CD4-positive, alpha-beta T cell (primary cell): ENCODE measurements at regions of chr4 and their contacts with region 1.

Region 1: GRCh38 chr4:89110986-89111832 is at the start of gene TIGD2:
- DNase-seq: peak; percentile 78 to 97 (median 88)
- ATAC-seq: peak; percentile 91
- H3K4me3 ChIP-seq: peak within 1 kb of the TSS; percentile 67
- H3K4me3 Mint-ChIP-seq: peak within 1 kb of the TSS; percentile 90
- H3K27ac ChIP-seq: peak within 1 kb of the TSS; percentile 22 to 52
- H3K27ac Mint-ChIP-seq: peak within 1 kb of the TSS; percentile 77
- H3K4me1 ChIP-seq: peaks cover 18% of the 10 kb centered on the region
- H3K4me1 Mint-ChIP-seq: peaks cover 27% of the 10 kb centered on the region
- H3K27me3 ChIP-seq: no peaks in the 10 kb centered on the region
- H3K27me3 Mint-ChIP-seq: no peaks in the 10 kb centered on the region
- CTCF ChIP-seq: peak; percentile 98
- total RNA-seq, gene TIGD2: 3.3 to 3.9 TPM

Region 2: GRCh38 chr4:87220094-87220822 is 1891.0 kb before region 1 on chr4 and contains the start of gene KLHL8:
- CTCF ChIA-PET with region 1: no interaction called
- POLR2A ChIA-PET with region 1: interaction called, 3 read pairs
- intact Hi-C with region 1: loop called in 1 of 2 experiments (anchors 10 kb)
- DNase-seq: peak; percentile 71 to 94 (median 83)
- ATAC-seq: peak; percentile 88
- H3K4me3 ChIP-seq: peak within 1 kb of the TSS; percentile 96
- H3K4me3 Mint-ChIP-seq: peak within 1 kb of the TSS; percentile 96
- H3K27ac ChIP-seq: peak within 1 kb of the TSS; percentile 79 to 88
- H3K27ac Mint-ChIP-seq: peak within 1 kb of the TSS; percentile 88
- H3K4me1 ChIP-seq: peaks cover 24% of the 10 kb centered on the region
- H3K4me1 Mint-ChIP-seq: peaks cover 24% of the 10 kb centered on the region
- H3K27me3 ChIP-seq: no peaks in the 10 kb centered on the region
- H3K27me3 Mint-ChIP-seq: no peaks in the 10 kb centered on the region
- CTCF ChIP-seq: no peak
- total RNA-seq, gene KLHL8: 6.3 to 7.0 TPM

Region 3: DNA sequence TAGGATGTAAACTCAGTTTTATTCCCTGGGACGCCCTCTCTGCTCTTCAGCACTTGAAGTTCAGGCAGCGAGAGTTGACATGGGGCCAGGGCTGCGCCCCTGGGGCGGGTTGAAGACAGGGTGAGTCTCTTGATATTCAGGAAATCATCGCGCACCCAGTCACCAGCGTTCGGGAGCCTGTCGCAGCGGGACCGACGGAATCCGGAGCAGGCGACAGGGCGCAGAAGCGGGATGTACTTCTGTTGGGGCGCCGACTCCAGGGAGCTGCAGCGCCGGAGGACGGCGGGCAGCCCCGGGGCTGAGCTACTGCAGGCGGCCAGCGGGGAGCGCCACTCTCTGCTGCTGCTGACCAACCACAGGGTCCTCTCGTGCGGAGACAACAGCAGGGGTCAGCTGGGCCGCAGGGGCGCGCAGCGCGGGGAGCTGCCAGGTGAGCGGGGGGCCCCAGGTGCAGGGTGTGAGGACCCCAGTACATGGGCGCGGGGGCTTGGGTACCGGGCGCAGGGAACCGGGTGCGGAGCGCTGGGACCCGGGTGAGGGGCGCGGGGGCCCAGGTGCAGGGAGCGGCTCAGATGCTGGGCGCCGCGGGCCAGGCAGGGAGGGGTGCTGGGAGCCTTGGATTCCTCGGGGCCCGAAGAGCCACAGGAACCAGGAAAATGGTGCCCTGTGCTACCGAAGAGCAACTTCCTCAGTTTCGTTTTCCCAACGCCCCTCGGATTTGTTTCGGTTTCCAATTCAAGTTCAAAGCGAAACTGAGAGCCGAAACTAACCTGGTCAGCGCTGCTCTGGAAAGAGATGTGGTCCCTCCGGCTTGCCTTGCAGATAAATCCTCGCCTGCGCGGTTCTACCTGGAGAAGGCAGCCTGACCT is 732.3 kb before region 1 on chr4 and contains the start of gene HERC6:
- CTCF ChIA-PET with region 1: no interaction called
- POLR2A ChIA-PET with region 1: no interaction called
- intact Hi-C with region 1: loop called in 1 of 2 experiments (anchors 10 kb)
- DNase-seq: peak; percentile 48 to 93 (median 59)
- ATAC-seq: peak; percentile 62
- H3K4me3 ChIP-seq: peak within 1 kb of the TSS; percentile 74
- H3K4me3 Mint-ChIP-seq: peak within 1 kb of the TSS; percentile 94
- H3K27ac ChIP-seq: peak within 1 kb of the TSS; percentile 47 to 89
- H3K27ac Mint-ChIP-seq: peak within 1 kb of the TSS; percentile 93
- H3K4me1 ChIP-seq: peaks cover 35% of the 10 kb centered on the region
- H3K4me1 Mint-ChIP-seq: peaks cover 48% of the 10 kb centered on the region
- H3K27me3 ChIP-seq: no peaks in the 10 kb centered on the region
- H3K27me3 Mint-ChIP-seq: no peaks in the 10 kb centered on the region
- CTCF ChIP-seq: peak; percentile 76
- total RNA-seq, gene HERC6: 9.5 to 10.6 TPM

Region 4: GRCh38 chr4:88523325-88524129 is 587.7 kb before region 1 on chr4 and contains the start of gene PYURF:
- CTCF ChIA-PET with region 1: no interaction called
- POLR2A ChIA-PET with region 1: no interaction called
- intact Hi-C with region 1: loop called in 1 of 2 experiments (anchors 5 kb)
- DNase-seq: peak; percentile 36 to 88 (median 69)
- ATAC-seq: peak; percentile 67
- H3K4me3 ChIP-seq: peak within 1 kb of the TSS; percentile 82
- H3K4me3 Mint-ChIP-seq: peak within 1 kb of the TSS; percentile 97
- H3K27ac ChIP-seq: peak within 1 kb of the TSS; percentile 42 to 59
- H3K27ac Mint-ChIP-seq: peak within 1 kb of the TSS; percentile 88
- H3K4me1 ChIP-seq: peaks cover 20% of the 10 kb centered on the region
- H3K4me1 Mint-ChIP-seq: peaks cover 58% of the 10 kb centered on the region
- H3K27me3 ChIP-seq: no peaks in the 10 kb centered on the region
- H3K27me3 Mint-ChIP-seq: no peaks in the 10 kb centered on the region
- CTCF ChIP-seq: no peak
- total RNA-seq, gene PYURF: 25.3 to 26.8 TPM

Region 5: DNA sequence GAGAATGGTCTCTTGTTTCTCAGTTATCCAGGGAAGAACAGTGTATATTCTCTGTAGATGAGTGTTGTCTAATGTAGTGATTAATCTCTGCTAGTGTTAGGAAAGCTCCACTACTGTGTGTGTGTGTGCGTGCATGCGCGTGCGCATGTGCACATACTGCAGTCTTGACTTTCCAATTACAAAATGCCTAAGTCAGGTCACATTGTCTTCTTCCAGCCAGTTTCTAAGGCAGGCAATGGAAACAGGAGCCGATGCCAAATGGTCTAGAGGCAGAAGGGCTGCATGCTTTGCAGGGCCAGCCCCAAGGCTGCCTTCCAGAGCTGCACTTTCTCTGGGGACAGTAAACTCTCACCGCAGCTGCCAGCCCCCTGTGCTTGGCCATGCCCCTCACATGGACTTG is 383.1 kb before region 1 on chr4:
- CTCF ChIA-PET with region 1: no interaction called
- POLR2A ChIA-PET with region 1: no interaction called
- intact Hi-C with region 1: no loop called
- DNase-seq: no peak
- ATAC-seq: no peak
- H3K4me3 ChIP-seq: no peak overlapping the region
- H3K4me3 Mint-ChIP-seq: no peak overlapping the region
- H3K27ac ChIP-seq: no peak overlapping the region
- H3K27ac Mint-ChIP-seq: peak overlapping the region; percentile 7
- H3K4me1 ChIP-seq: no peaks in the 10 kb centered on the region
- H3K4me1 Mint-ChIP-seq: no peaks in the 10 kb centered on the region
- H3K27me3 ChIP-seq: no peaks in the 10 kb centered on the region
- H3K27me3 Mint-ChIP-seq: no peaks in the 10 kb centered on the region
- CTCF ChIP-seq: no peak

Region 6: DNA sequence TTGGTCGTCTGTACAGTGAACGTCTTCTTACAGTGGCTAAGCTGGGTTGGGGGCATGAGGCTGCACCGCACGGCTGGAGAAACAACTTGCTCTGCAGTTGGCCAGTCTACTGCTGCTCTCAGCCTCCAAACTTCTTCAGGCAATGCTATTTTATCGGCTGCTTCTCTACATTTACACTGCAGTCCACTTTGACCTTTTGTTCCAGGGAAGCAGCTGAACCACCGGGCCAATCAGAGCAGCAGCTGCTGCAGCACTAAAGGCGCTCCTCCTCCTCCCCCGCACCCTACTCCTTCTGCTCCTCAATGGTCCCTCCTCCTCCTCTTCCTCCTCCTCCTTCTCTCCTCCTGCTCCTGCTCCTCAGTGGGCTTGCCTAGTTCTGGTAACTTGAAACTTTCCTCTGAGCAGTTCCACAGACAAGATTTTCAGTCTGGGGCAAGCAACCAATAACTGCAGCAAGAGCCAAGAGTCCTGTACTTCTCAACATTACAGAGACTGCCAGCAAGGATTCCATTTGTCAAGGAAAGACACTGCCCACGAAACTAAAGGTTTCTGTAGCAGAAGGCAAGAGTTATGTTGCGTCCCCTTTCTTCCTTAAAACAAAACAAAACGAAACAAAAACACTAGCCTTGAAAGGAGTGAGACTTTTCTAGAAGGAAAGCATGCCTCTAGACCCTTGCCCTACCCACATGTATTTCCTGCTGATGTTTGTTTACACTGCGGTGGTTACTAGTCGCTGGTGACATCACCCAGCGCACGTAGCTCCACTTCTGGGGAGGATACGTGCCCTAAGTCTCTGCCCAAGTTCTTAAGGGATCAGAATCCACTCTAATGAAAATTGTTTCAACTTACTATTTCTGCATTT is 287.9 kb before region 1 on chr4:
- CTCF ChIA-PET with region 1: no interaction called
- POLR2A ChIA-PET with region 1: interaction called, 3 read pairs
- intact Hi-C with region 1: loop called (anchors 1 to 5 kb)
- DNase-seq: peak; percentile 36 to 94 (median 61)
- ATAC-seq: peak; percentile 92
- H3K4me3 ChIP-seq: peak overlapping the region; percentile 61
- H3K4me3 Mint-ChIP-seq: peak overlapping the region; percentile 91
- H3K27ac ChIP-seq: peak overlapping the region; percentile 78 to 90
- H3K27ac Mint-ChIP-seq: peak overlapping the region; percentile 97
- H3K4me1 ChIP-seq: peaks cover 6% of the 10 kb centered on the region
- H3K4me1 Mint-ChIP-seq: peaks cover 50% of the 10 kb centered on the region
- H3K27me3 ChIP-seq: no peaks in the 10 kb centered on the region
- H3K27me3 Mint-ChIP-seq: no peaks in the 10 kb centered on the region
- CTCF ChIP-seq: no peak

Region 7: DNA sequence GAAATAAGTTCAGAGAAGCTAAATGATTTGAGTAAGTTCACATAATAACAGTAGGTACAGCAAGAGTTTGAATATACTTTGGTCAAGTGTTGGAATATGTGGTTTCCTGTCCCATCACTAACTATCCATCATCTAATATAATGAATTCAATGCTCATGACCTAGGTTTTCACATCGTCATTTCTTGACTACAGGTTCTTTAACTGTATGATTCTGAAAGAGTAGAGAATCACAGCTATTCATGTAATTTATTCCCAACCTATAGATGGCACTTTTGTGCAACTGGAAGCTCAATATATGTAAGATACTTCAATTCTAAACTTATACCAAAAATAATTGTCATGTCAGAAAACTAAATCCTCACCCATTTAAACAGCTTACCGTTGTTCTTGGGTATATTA is 53.2 kb after region 1 on chr4:
- CTCF ChIA-PET with region 1: no interaction called
- POLR2A ChIA-PET with region 1: no interaction called
- intact Hi-C with region 1: no loop called
- DNase-seq: no peak
- ATAC-seq: no peak
- H3K4me3 ChIP-seq: no peak overlapping the region
- H3K4me3 Mint-ChIP-seq: no peak overlapping the region
- H3K27ac ChIP-seq: no peak overlapping the region
- H3K27ac Mint-ChIP-seq: no peak overlapping the region
- H3K4me1 ChIP-seq: no peaks in the 10 kb centered on the region
- H3K4me1 Mint-ChIP-seq: no peaks in the 10 kb centered on the region
- H3K27me3 ChIP-seq: peaks cover 0 to 4% of the 10 kb centered on the region in 2 experiments
- H3K27me3 Mint-ChIP-seq: peaks cover 8% of the 10 kb centered on the region
- CTCF ChIP-seq: peak; percentile 24

Region 8: GRCh38 chr4:89307446-89308160 is 196.4 kb after region 1 on chr4 and contains the start of gene GPRIN3:
- CTCF ChIA-PET with region 1: no interaction called
- POLR2A ChIA-PET with region 1: no interaction called
- intact Hi-C with region 1: loop called in 1 of 2 experiments (anchors 10 kb)
- DNase-seq: peak; percentile 45 to 88 (median 63)
- ATAC-seq: peak; percentile 66
- H3K4me3 ChIP-seq: peak within 1 kb of the TSS; percentile 93
- H3K4me3 Mint-ChIP-seq: peak within 1 kb of the TSS; percentile 95
- H3K27ac ChIP-seq: peak within 1 kb of the TSS; percentile 73 to 88
- H3K27ac Mint-ChIP-seq: peak within 1 kb of the TSS; percentile 92
- H3K4me1 ChIP-seq: peaks cover 26% of the 10 kb centered on the region
- H3K4me1 Mint-ChIP-seq: peaks cover 67% of the 10 kb centered on the region
- H3K27me3 ChIP-seq: no peaks in the 10 kb centered on the region
- H3K27me3 Mint-ChIP-seq: no peaks in the 10 kb centered on the region
- CTCF ChIP-seq: no peak
- total RNA-seq, gene GPRIN3: 46.4 TPM

Region 9: GRCh38 chr4:89509708-89510281 is 398.6 kb after region 1 on chr4:
- CTCF ChIA-PET with region 1: no interaction called
- POLR2A ChIA-PET with region 1: no interaction called
- intact Hi-C with region 1: no loop called
- DNase-seq: peak in 3 of 14 experiments; percentile 22 to 66 (median 24)
- ATAC-seq: peak; percentile 51
- H3K4me3 ChIP-seq: no peak overlapping the region
- H3K4me3 Mint-ChIP-seq: no peak overlapping the region
- H3K27ac ChIP-seq: no peak overlapping the region
- H3K27ac Mint-ChIP-seq: no peak overlapping the region
- H3K4me1 ChIP-seq: no peaks in the 10 kb centered on the region
- H3K4me1 Mint-ChIP-seq: peaks cover 9% of the 10 kb centered on the region
- H3K27me3 ChIP-seq: no peaks in the 10 kb centered on the region
- H3K27me3 Mint-ChIP-seq: peaks cover 9% of the 10 kb centered on the region
- CTCF ChIP-seq: no peak